Caco-2 (cell line): ENCODE measurements at regions of chr4 and their contacts with region 1.

Region 1: DNA sequence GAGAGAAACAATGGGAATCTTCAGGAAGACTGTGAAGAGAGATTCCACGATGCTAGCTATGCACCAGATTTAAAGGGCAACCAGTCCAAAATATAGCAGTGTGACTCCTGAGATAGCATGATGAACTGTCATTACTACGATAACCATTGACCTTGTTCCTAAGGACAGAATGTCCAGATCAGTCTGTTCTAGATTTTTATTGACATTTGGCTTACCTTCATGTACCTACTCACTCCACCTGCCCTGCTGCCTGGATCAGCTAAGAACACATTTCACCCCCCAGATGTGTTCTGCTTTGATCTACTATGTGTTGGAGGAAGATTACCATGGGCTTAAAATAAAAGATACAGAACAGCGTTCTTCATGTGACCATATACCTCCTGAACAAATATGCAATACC is 50.1 kb downstream of the ELF2 start:
- DNase-seq: peak; percentile 41 to 52
- H3K4me3 ChIP-seq: no peak overlapping the region
- H3K4me3 Mint-ChIP-seq: no peak overlapping the region
- H3K27ac Mint-ChIP-seq: peak overlapping the region; percentile 4
- H3K4me1 ChIP-seq: peaks cover 24% of the 10 kb centered on the region
- H3K4me1 Mint-ChIP-seq: peaks cover 30% of the 10 kb centered on the region
- H3K27me3 ChIP-seq: no peaks in the 10 kb centered on the region
- H3K27me3 Mint-ChIP-seq: no peaks in the 10 kb centered on the region
- CTCF ChIP-seq: no peak

Region 2: DNA sequence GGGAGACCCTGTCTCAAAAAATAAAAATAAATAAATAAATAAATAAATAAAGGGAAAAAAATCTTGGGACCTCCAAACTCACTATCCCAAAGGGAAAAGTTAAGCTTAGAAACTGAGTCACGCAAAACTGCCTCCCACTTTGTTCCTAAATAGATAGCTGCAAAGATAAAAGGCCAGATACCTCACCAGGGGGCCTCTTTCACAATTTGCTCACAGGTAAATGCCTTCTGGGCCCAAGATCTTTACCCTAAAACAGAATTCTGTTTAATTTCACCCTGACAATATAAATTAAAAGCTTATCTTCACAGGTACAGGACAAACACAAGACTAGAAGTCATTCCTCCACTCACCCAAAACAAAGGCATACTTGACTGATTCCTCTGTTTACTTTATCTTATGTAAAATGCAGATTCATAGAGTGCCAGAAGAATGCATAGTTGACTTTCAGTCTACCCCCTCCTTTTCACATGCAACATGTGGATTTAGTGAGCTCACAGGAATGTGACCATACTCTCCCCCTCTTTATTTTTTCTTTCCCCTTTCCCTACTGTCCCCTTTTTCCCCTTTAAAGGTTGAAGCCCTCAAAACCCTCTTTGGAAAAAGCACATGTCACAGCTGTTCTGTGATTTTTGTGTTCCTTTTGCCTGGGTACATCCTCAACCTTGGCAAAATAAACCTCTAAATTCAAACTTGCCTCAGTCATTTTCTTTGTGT is 26.7 kb after region 1 on chr4:
- CTCF ChIA-PET with region 1: interaction called, 4 read pairs
- POLR2A ChIA-PET with region 1: interaction called, 3 read pairs
- intact Hi-C with region 1: loop called (anchors 1 kb)
- DNase-seq: peak in 1 of 2 experiments; percentile 60
- H3K4me3 ChIP-seq: no peak overlapping the region
- H3K4me3 Mint-ChIP-seq: peak overlapping the region; percentile 32
- H3K27ac Mint-ChIP-seq: peak overlapping the region; percentile 90
- H3K4me1 ChIP-seq: peaks cover 60% of the 10 kb centered on the region
- H3K4me1 Mint-ChIP-seq: peaks cover 39% of the 10 kb centered on the region
- H3K27me3 ChIP-seq: no peaks in the 10 kb centered on the region
- H3K27me3 Mint-ChIP-seq: no peaks in the 10 kb centered on the region
- CTCF ChIP-seq: no peak

Region 3: GRCh38 chr4:139253713-139254112 is 126.8 kb after region 1 on chr4:
- CTCF ChIA-PET with region 1: no interaction called
- POLR2A ChIA-PET with region 1: no interaction called
- intact Hi-C with region 1: no loop called
- DNase-seq: no peak
- H3K4me3 ChIP-seq: no peak overlapping the region
- H3K4me3 Mint-ChIP-seq: no peak overlapping the region
- H3K27ac Mint-ChIP-seq: no peak overlapping the region
- H3K4me1 ChIP-seq: no peaks in the 10 kb centered on the region
- H3K4me1 Mint-ChIP-seq: no peaks in the 10 kb centered on the region
- H3K27me3 ChIP-seq: no peaks in the 10 kb centered on the region
- H3K27me3 Mint-ChIP-seq: no peaks in the 10 kb centered on the region
- CTCF ChIP-seq: no peak

Region 4: DNA sequence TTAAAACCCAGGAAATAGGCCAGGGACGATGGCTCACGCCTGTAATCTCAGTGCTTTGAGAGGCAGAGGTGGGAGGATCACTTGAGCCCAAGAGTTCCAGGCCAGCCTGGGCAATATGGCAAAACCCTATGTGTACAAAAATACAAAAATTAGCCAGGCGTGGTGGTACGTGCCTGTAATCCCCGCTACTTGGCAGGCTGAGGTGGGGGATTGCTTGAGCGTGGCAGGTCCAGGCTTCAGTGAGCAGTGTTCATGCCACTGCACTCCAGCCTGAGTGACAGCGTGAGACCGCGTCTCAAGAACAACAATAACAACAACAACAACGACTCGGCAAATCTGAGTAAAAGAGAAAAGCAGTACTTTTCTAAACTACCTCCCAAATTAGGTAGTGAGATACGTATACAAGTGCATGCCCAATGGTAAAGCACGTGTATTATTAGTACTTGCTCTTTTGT is 188.3 kb after region 1 on chr4:
- CTCF ChIA-PET with region 1: no interaction called
- POLR2A ChIA-PET with region 1: no interaction called
- intact Hi-C with region 1: no loop called
- DNase-seq: no peak
- H3K4me3 ChIP-seq: no peak overlapping the region
- H3K4me3 Mint-ChIP-seq: no peak overlapping the region
- H3K27ac Mint-ChIP-seq: no peak overlapping the region
- H3K4me1 ChIP-seq: peaks cover 5% of the 10 kb centered on the region; the same call in 1 of the 2 replicates
- H3K4me1 Mint-ChIP-seq: peaks cover 14% of the 10 kb centered on the region
- H3K27me3 ChIP-seq: no peaks in the 10 kb centered on the region
- H3K27me3 Mint-ChIP-seq: no peaks in the 10 kb centered on the region
- CTCF ChIP-seq: no peak